GM13977 (cell line): ENCODE measurements at regions of chr3 and their contacts with region 1.

Region 1: GRCh38 chr3:4712143-4712542 is 219.0 kb downstream of the ITPR1 start:
- DNase-seq: no peak
- CTCF ChIP-seq: no peak

Region 2: DNA sequence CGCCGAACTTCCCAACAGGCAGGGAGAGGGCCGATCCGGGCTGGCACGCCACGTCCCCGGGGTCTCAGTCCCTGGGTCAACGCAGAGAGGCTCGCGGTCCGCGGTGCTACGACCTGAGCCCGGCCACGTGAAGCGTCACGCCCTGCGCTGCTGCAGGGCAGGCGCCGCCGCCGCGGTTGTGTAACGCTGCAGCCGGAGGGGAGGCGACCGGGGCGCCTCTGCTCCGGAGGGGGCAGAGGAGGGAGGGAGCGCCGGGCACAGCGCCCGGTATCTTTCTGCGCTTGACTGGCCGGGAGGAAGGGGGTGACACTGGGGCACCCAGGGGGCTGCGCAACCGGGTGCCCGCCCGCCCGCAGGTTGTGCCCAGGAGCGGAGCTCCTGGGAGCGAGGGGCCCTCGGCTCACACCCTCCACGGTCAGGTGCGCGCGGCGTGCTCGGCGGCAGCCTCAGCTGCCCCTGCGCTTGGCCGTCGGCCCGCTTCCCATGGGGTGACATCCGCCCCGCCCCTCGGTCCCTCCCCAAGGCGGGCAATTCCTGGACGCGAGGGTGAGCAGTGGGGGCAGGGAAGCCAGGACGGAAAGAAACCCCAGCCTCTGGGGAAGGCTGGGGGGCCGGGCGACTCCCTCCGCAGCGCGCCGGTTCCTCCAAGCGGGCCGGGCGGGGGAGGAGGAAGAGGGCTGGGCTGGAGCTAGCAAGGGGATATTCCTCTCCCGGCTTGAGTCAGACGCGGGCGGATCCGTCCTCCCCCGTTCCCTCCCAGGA is 266.2 kb after region 1 on chr3:
- in situ Hi-C with region 1: loop called (anchors 10 kb)
- DNase-seq: peak; percentile 89
- CTCF ChIP-seq: no peak

Region 3: GRCh38 chr3:5057857-5058324 is 345.7 kb after region 1 on chr3:
- in situ Hi-C with region 1: loop called (anchors 10 kb)
- DNase-seq: peak; percentile 65
- CTCF ChIP-seq: peak; percentile 76

Region 4: GRCh38 chr3:5330152-5330810 is 618.1 kb after region 1 on chr3:
- in situ Hi-C with region 1: no loop called
- DNase-seq: no peak
- CTCF ChIP-seq: no peak

Region 5: DNA sequence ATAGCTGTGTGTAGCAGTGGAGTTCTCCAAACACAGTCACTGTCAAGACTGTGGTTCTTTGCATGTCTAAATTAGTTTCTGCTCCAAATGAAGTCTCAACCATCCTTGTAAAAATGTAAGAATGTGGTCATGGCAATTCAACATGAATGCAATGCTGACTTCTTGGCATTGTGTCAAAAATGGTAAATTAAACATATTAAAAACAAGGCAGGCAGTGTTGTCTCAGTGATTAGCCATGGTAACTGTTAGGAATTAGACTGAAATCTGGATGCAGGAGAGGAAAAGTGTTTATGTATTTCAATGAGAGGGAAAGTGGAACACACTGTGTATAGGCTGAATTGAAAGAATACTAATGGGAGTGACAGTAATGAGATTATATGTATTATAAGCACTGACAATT is 1072.5 kb after region 1 on chr3:
- in situ Hi-C with region 1: no loop called
- DNase-seq: no peak
- CTCF ChIP-seq: no peak